Posterior cingulate gyrus (tissue), 11 donors: ENCODE measurements at regions of chr7 and their contacts with region 1.

Region 1: DNA sequence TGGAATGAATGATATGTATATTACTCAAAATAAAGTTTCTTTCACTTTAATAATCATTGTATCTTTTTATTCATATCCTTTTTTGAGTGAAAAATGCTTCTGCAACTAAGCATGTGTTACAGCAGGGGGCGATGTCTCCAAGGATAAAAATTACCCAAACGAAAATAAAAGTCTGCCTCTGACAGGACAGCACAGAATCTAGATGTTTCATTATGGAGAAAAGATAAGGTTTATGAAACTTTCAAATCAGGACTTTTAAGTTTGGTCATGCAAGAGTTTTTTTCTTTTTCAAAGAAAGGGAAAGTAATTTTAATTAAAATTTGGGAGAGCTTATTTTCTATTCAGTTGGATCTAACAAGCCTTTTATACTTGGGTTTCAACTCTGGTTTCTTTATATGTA is 48.4 kb downstream of the TES start:
- DNase-seq: peak in 1 of 10 donors; percentile 24

Region 2: GRCh38 chr7:116354546-116355408 is 96.0 kb after region 1 on chr7:
- intact Hi-C with region 1: no loop called
- DNase-seq: no peak

Region 3: DNA sequence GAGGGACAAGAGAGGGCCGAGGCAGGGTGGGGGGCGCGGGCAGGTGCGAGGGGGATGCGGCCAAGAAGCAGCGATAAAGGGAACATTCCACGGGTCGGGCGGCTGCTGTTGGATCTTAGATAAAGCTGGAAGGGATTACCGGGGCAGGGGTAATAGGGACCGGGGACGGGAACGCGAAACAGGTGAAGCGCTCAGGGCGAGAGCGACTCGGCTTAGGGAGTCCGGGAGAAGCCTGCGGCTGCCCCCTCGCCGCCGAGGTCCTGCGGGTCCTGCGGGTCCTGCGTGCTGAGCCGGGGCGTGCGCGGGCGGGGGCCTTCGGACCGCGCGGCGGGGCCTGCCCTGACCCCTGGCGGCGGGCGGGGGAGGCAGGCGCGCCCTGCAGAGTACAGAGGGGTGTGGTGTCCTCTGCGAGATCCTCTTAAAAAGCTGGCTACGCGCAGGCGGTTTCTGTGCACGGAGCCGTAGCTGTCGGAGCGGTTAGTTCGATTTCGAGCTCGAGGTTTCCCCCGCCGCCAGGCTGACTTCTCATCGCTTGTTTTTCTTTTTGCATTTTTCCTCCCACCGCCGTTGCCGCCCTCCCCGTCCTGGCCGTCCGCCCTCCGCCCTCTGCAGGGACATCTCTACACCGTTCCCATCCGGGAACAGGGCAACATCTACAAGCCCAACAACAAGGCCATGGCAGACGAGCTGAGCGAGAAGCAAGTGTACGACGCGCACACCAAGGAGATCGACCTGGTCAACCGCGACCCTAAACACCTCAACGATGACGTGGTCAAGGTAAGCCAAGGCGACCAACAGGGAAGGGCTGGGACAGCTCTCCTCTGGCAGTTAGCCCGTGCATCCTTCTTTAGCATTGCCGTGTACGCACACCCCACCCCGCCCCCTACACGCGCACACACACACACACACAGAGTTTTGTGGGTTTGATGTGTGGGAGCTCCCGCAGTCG is 267.5 kb after region 1 on chr7:
- intact Hi-C with region 1: loop called (anchors 5 kb)
- DNase-seq: peak in 8 of 10 donors; percentile 30 to 89 (median 57)